Gastrocnemius medialis (tissue), 4 donors: ENCODE measurements at regions of chr6 and their contacts with region 1.

Region 1: GRCh38 chr6:108655806-108656651 is 95.3 kb downstream of the FOXO3 start:
- DNase-seq: peak; percentile 52 to 69
- ATAC-seq: peak; percentile 37 to 60
- H3K4me3 ChIP-seq: peak overlapping the region; percentile 50 to 67 (median 62)
- H3K27ac ChIP-seq: peak overlapping the region; percentile 89 to 94 (median 92)
- H3K4me1 ChIP-seq: peaks cover 77 to 85% of the 10 kb centered on the region in 2 donors
- H3K27me3 ChIP-seq: no peaks in the 10 kb centered on the region
- CTCF ChIP-seq: no peak
- POLR2A ChIP-seq: peak; percentile 33 to 75

Region 2: DNA sequence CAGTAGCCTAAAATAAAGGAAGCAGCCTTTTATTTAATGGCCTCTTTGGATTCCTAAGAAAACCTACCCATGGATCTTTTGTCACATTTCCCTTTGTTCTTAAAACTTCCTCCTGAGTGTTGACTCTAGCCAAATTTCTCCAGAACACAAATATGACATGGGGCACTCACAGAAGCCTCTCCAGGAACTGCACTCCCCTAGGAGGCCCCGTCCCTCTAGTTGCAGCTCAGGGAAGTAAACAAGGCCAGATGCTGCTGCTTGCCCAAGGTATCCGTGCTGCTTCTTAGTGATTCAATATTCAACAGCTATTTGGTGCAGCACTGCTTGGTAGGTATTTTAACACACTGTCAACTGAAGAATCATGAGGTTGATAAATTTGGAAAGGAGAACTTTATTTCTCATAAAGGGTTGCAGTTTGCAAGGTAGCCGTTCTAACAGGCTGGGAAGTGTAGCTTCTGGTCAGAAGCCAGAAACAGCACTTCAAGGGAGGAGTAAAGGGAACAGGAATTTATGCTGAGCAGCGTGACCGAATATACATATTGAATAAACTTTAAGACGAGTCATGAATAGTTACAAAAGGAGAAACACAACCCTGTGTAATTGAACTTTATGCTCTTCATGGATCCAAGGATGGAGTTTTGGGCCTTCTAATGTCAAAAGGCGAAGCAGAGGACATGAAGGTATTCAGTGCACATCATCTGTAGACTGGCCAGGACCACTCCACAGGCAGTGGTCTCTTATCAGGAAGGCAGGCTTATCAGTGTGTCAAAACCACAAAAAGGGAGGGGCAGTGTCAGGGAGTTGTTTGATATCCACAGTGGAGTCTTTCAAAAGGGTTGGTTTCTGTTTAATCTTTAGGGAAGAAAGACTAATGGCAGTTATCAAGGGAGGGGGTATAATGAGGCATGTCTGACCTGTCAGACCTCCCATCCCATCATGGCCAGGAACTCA is 1744.8 kb before region 1 on chr6:
- in situ Hi-C with region 1: no loop called
- intact Hi-C with region 1: no loop called
- DNase-seq: no peak
- ATAC-seq: no peak
- H3K4me3 ChIP-seq: no peak overlapping the region
- H3K27ac ChIP-seq: no peak overlapping the region
- H3K4me1 ChIP-seq: no peaks in the 10 kb centered on the region
- H3K27me3 ChIP-seq: no peaks in the 10 kb centered on the region
- CTCF ChIP-seq: no peak
- POLR2A ChIP-seq: no peak

Region 3: GRCh38 chr6:108592371-108593337 is 63.4 kb before region 1 on chr6:
- in situ Hi-C with region 1: loop called in 1 of 4 experiments (anchors 5 kb)
- intact Hi-C with region 1: loop called (anchors 2 kb)
- DNase-seq: peak; percentile 91 to 93
- ATAC-seq: peak; percentile 71 to 78
- H3K4me3 ChIP-seq: peak overlapping the region in 3 of 4 donors; percentile 29 to 40 (median 39)
- H3K27ac ChIP-seq: peak overlapping the region; percentile 86 to 96 (median 90)
- H3K4me1 ChIP-seq: peaks cover 97 to 100% of the 10 kb centered on the region in 2 donors
- H3K27me3 ChIP-seq: no peaks in the 10 kb centered on the region
- CTCF ChIP-seq: no peak
- POLR2A ChIP-seq: peak in 1 of 2 donors; percentile 65

Region 4: DNA sequence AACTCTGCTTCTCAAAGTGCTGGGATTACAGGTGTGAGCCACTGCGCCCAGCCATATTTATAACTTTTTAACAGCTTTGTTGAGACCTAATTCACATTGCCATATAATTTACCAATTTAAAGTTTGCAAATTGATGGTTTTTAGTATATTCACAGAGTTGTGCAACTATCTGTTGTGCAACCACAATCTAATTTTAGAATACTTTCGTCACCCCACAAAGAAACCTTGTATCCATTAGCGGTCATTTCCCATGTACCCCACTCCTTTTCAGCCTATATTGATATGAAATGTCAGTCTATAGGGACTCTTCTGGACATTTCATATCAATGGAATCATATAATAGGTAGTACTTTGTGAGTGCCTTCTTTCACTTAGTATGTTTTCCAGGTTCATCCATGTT is 39.5 kb before region 1 on chr6:
- in situ Hi-C with region 1: no loop called
- intact Hi-C with region 1: loop called (anchors 5 kb)
- DNase-seq: no peak
- ATAC-seq: peak in 1 of 2 donors; percentile 60
- H3K4me3 ChIP-seq: no peak overlapping the region
- H3K27ac ChIP-seq: peak overlapping the region; percentile 58 to 74 (median 70)
- H3K4me1 ChIP-seq: peaks cover 80 to 81% of the 10 kb centered on the region in 2 donors
- H3K27me3 ChIP-seq: no peaks in the 10 kb centered on the region
- CTCF ChIP-seq: no peak
- POLR2A ChIP-seq: no peak

Region 5: DNA sequence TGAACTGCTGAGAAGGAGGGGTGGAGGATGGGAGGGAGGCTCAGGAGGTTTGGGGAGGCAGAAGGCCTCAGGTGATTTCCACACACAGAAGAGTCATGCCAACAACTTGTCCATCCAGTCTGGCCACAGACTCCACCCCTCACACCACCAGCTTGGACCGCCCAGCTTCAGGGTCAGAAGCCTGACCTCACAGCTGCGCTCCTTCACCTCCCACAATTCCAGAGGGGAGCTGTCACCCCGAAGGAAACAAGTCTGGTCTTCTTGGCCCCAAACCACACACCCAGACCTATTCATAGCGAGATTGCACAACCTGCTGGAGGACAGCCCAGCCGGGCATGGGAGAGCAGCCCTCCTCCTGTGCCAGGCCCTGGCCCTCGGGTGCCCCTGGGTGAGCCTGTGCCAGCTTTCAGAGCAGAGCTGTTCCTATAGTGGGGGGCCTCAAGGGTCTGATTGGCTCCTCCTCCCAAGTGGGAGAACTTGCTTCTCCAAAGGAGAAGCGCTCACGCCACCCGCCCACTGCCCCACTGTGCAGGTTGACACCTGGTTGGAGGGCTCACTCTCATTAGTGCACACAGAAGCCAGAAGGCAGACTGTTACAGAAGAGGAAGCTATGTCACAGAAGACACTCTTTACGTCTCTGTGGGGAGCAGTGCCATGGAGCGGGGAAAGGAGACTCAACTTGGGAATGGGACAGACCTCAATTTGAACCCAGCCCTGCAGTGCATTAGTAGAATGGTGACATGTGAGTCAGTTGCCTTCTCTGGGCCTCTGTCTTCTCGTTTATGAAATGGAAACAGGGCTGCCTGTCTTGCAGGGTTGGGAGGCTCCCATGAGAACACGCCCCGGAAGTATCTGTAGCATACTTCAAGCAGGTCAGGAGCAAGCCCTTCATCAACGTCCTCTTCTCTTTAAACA is 33.5 kb after region 1 on chr6:
- in situ Hi-C with region 1: no loop called
- intact Hi-C with region 1: loop called (anchors 2 kb)
- DNase-seq: peak; percentile 91 to 98
- ATAC-seq: peak; percentile 81 to 84
- H3K4me3 ChIP-seq: peak overlapping the region in 1 of 4 donors; percentile 1
- H3K27ac ChIP-seq: peak overlapping the region; percentile 80 to 97 (median 94)
- H3K4me1 ChIP-seq: peaks cover 59 to 61% of the 10 kb centered on the region in 2 donors
- H3K27me3 ChIP-seq: no peaks in the 10 kb centered on the region
- CTCF ChIP-seq: no peak
- POLR2A ChIP-seq: peak in 1 of 2 donors; percentile 20